Caco-2 (cell line): ENCODE measurements at regions of chr20 and their contacts with region 1.

Region 1: DNA sequence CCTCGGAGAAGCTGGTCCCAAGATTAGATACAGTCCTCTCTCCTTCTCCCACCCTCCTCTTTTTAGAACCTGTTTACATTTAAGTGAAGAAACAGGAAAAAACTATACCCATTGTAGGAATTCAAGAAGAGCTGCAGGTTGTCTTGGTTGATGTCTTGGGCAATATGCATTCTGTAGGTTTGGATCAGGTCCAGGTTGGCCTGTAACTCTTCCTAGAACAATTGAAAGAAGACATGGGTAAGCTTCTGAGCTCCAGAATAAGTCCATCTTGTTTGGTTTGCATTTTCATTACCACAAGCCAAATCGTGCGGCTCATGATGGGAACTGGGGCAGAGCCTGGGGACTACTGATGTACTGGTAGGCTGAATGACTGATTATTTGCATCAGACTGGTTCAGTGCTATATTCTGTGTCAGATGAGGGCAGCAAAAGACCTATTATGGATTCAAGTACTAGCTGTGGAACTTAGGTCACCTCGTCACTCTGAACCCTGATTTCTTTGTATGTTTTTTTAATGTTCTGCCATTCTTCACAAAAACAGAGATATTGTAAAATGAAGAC is 20.3 kb upstream of the SLA2 start:
- DNase-seq: peak in 1 of 2 experiments; percentile 56
- H3K4me3 ChIP-seq: no peak overlapping the region
- H3K4me3 Mint-ChIP-seq: no peak overlapping the region
- H3K27ac Mint-ChIP-seq: no peak overlapping the region
- H3K4me1 ChIP-seq: peaks cover 7% of the 10 kb centered on the region
- H3K4me1 Mint-ChIP-seq: peaks cover 6% of the 10 kb centered on the region
- H3K27me3 ChIP-seq: no peaks in the 10 kb centered on the region
- H3K27me3 Mint-ChIP-seq: no peaks in the 10 kb centered on the region
- CTCF ChIP-seq: peak; percentile 24 to 52

Region 2: DNA sequence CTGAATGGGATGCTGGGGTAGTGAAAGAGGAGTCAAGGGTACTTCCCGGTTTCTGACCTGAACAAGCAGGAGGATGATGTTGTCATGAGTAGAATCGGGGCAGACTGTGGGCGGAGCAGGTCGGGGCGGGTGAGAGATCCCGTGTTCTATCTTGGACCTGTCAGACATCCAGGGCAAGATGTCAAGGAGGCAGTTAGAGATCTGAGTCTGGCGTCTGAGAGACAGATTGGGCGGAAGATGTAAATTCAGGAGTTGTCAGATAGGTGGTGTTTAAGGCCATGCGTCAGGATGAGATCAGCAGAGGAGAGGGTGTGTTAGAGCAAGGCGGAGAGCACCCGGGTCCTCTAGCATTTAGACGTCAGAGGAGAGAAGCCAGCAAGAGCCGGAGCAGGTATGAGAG is 244.6 kb before region 1 on chr20:
- CTCF ChIA-PET with region 1: no interaction called
- POLR2A ChIA-PET with region 1: no interaction called
- intact Hi-C with region 1: no loop called
- DNase-seq: no peak
- H3K4me3 ChIP-seq: no peak overlapping the region
- H3K4me3 Mint-ChIP-seq: no peak overlapping the region
- H3K27ac Mint-ChIP-seq: no peak overlapping the region
- H3K4me1 ChIP-seq: no peaks in the 10 kb centered on the region
- H3K4me1 Mint-ChIP-seq: no peaks in the 10 kb centered on the region
- H3K27me3 ChIP-seq: no peaks in the 10 kb centered on the region; the same call in none of the 2 replicates
- H3K27me3 Mint-ChIP-seq: peaks cover 33% of the 10 kb centered on the region
- CTCF ChIP-seq: no peak

Region 3: DNA sequence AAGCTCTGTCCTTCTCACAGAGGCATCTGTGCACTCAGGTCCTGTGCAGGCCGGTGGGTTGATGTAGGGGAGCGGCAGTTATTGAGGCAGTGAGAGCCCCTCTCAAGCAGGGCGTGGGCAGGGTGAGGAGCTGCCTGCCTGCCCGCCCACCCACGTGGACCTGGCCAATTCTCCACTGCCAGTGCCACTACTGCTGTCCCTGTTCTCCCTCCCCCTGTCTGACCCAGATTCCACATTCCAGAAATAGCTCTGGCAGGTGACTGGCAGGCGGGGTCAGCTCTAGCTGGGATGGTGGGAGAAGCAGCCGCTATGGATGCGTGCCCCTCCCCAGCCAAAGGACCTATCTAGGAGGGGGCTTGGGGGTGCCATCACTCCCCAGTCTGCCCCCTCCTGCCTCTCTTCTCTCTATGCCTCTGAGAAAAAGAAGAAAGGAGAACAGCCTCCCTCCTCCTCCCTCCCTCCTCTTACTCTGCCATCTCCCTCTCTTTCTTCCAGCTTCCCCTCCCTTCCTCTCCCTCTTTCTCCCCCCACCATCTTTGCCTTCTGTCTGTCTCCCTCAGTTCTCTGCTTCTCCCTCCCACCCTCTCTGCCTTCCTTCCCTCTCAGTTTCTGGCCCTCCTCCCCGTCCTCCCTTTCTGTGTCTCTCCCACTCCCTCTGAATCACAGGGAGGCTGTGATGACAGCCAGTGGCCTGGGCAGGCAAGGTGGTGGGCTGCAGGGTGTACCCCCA is 211.4 kb before region 1 on chr20:
- CTCF ChIA-PET with region 1: no interaction called
- POLR2A ChIA-PET with region 1: no interaction called
- intact Hi-C with region 1: no loop called
- DNase-seq: peak; percentile 88 to 90
- H3K4me3 ChIP-seq: no peak overlapping the region
- H3K4me3 Mint-ChIP-seq: peak overlapping the region; percentile 55
- H3K27ac Mint-ChIP-seq: peak overlapping the region; percentile 70
- H3K4me1 ChIP-seq: peaks cover 22% of the 10 kb centered on the region
- H3K4me1 Mint-ChIP-seq: peaks cover 24% of the 10 kb centered on the region
- H3K27me3 ChIP-seq: no peaks in the 10 kb centered on the region
- H3K27me3 Mint-ChIP-seq: no peaks in the 10 kb centered on the region
- CTCF ChIP-seq: no peak

Region 4: DNA sequence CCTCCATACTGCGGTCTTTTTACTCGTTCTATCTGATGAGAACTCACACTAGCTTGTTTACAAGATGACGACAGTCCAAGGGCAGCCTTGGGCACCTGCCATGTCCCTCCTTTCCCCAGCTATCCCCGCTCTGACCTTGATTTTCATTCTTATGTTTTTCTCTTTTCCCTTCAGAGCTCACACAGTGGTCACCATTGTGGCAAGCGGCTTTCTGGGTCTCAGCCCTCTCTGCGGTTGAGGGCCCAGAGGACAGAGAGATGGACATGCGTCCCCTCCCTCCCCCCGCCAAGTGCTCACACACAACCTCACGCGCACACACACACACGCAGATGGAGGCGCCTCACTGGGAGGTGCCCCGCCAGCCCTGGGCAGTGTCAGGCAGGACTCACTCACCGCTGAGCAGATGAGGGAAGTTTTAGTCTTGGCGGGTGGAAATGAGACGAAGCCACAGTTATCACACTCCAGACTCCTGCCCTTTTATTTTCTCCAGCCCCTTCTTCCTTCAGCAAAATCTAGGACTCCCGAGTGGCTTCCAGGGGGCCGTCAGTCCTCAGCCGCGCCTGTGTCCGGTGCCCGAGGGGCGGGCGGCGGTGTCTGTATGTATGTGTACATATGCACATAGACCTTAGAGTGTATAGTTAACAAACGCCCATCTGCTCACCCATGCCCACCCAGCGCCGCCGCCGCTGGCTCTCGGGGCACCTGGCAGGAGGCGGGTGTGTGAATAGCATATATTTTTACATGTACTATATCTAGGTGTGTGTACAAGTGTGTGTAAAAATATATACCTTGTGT is 138.7 kb before region 1 on chr20:
- CTCF ChIA-PET with region 1: no interaction called
- POLR2A ChIA-PET with region 1: no interaction called
- intact Hi-C with region 1: no loop called
- DNase-seq: no peak
- H3K4me3 ChIP-seq: no peak overlapping the region
- H3K4me3 Mint-ChIP-seq: no peak overlapping the region
- H3K27ac Mint-ChIP-seq: no peak overlapping the region
- H3K4me1 ChIP-seq: no peaks in the 10 kb centered on the region
- H3K4me1 Mint-ChIP-seq: no peaks in the 10 kb centered on the region
- H3K27me3 ChIP-seq: no peaks in the 10 kb centered on the region
- H3K27me3 Mint-ChIP-seq: no peaks in the 10 kb centered on the region
- CTCF ChIP-seq: no peak

Region 5: DNA sequence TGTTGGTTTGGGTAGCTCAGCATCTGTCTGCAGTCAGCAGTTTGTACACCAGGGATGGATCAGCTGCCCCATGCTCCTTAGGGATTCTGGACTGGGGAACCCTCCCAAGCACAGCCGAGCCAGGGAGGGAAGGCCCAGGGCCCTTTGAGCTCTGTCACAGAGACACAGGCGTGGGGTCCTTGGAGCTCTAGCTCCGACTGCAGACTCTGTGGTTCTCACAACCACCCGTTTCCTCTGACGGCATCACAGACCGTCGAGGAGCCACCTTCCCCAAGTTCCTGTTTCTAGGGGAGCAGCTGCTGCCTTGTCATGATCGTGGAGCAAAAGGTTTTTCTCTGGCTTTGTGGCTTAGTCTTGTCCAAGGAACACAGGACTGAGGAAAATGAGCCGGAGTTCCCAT is 20.3 kb before region 1 on chr20 and contains the start of gene SLA2:
- CTCF ChIA-PET with region 1: interaction called, 4 read pairs
- POLR2A ChIA-PET with region 1: no interaction called
- intact Hi-C with region 1: loop called (anchors 2 kb)
- DNase-seq: no peak
- H3K4me3 ChIP-seq: no peak within 1 kb of the TSS
- H3K4me3 Mint-ChIP-seq: no peak within 1 kb of the TSS
- H3K27ac Mint-ChIP-seq: peak within 1 kb of the TSS; percentile 5
- H3K4me1 ChIP-seq: peaks cover 11% of the 10 kb centered on the region
- H3K4me1 Mint-ChIP-seq: peaks cover 9% of the 10 kb centered on the region
- H3K27me3 ChIP-seq: no peaks in the 10 kb centered on the region
- H3K27me3 Mint-ChIP-seq: no peaks in the 10 kb centered on the region
- CTCF ChIP-seq: no peak
- total RNA-seq, gene SLA2: 0.19 and 0.20 TPM in 2 replicates

Region 6: DNA sequence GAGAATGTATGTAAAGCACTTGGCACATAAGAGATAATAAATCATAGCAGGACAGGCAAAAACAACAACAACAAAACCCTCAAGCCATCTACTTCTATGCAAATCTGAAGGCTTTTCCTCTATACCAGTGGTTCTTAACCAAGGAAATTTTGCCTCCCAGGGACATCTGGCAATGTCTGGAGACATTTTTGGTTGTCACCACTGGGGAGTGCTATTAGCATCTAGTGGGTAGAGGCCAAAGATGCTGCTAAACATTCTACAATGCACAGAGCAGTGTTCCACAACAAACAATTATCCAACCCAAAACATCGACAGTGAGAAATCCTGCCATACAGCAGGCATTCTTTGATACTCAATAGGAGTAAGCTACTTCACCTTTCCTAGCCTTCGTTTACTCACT is 51.4 kb after region 1 on chr20:
- CTCF ChIA-PET with region 1: no interaction called
- POLR2A ChIA-PET with region 1: no interaction called
- intact Hi-C with region 1: no loop called
- DNase-seq: peak in 1 of 2 experiments; percentile 36
- H3K4me3 ChIP-seq: no peak overlapping the region
- H3K4me3 Mint-ChIP-seq: no peak overlapping the region
- H3K27ac Mint-ChIP-seq: no peak overlapping the region
- H3K4me1 ChIP-seq: no peaks in the 10 kb centered on the region
- H3K4me1 Mint-ChIP-seq: no peaks in the 10 kb centered on the region
- H3K27me3 ChIP-seq: no peaks in the 10 kb centered on the region
- H3K27me3 Mint-ChIP-seq: no peaks in the 10 kb centered on the region
- CTCF ChIP-seq: peak; percentile 22 to 40

Region 7: GRCh38 chr20:36728986-36729385 is 62.7 kb after region 1 on chr20:
- CTCF ChIA-PET with region 1: interaction called, 6 read pairs
- POLR2A ChIA-PET with region 1: no interaction called
- intact Hi-C with region 1: loop called (anchors 1 kb)
- DNase-seq: peak in 1 of 2 experiments; percentile 42
- H3K4me3 ChIP-seq: no peak overlapping the region
- H3K4me3 Mint-ChIP-seq: no peak overlapping the region
- H3K27ac Mint-ChIP-seq: no peak overlapping the region
- H3K4me1 ChIP-seq: no peaks in the 10 kb centered on the region
- H3K4me1 Mint-ChIP-seq: peaks cover 5% of the 10 kb centered on the region
- H3K27me3 ChIP-seq: no peaks in the 10 kb centered on the region
- H3K27me3 Mint-ChIP-seq: no peaks in the 10 kb centered on the region
- CTCF ChIP-seq: peak in 1 of 2 experiments; percentile 55

Region 8: GRCh38 chr20:36745927-36746659 is 79.8 kb after region 1 on chr20 and contains the start of gene NDRG3:
- CTCF ChIA-PET with region 1: interaction called, 10 read pairs
- POLR2A ChIA-PET with region 1: no interaction called
- intact Hi-C with region 1: no loop called
- DNase-seq: peak; percentile 99
- H3K4me3 ChIP-seq: peak within 1 kb of the TSS; percentile 91
- H3K4me3 Mint-ChIP-seq: peak within 1 kb of the TSS; percentile 86
- H3K27ac Mint-ChIP-seq: peak within 1 kb of the TSS; percentile 77
- H3K4me1 ChIP-seq: peaks cover 12% of the 10 kb centered on the region
- H3K4me1 Mint-ChIP-seq: peaks cover 21% of the 10 kb centered on the region
- H3K27me3 ChIP-seq: no peaks in the 10 kb centered on the region
- H3K27me3 Mint-ChIP-seq: no peaks in the 10 kb centered on the region
- CTCF ChIP-seq: peak in 1 of 2 experiments; percentile 7
- total RNA-seq, gene NDRG3: 41.5 and 47.4 TPM in 2 replicates